Caki2 (cell line): ENCODE measurements at regions of chr9 and their contacts with region 1.

Region 1: DNA sequence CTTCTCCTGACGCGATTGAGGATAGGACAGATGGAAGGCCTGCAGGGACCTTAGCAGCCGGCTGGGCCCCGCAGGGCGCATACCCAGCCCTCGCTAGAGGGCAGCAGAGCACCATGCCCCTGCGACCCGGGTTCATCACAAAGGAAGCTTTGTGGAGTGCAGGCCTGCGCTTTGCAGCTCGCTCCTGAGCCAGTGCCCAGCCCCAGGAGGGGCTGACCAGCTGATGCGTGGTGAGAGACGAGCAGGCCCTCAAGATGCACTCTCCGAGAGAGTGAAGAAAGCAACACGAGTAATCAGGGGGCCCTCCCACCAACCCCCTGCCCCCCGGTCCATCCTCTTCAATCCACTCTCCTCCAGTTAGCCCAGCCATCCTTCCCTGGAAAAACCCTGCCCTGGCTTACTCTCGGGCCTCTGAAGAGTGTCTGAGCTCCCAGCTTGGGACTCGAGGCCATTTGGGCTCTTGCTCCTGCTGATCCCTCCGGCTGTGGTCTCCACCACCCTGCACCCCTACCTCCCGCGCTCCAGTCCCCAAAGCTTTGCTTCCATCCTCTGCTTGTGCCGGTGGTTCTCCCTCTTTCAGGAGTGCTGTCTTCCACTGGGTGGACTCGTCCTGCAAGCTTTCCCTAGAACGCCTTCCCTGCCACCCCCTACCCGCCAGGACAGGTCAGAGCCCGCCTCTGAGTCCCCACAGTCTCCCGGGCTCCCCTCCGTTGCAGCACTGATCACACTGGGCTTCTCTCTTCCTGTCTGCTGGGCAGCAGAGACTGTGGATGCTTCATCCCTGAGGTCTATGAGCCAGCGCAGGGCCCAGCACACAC is 9.1 kb upstream of the KIF12 start:
- DNase-seq: peak; percentile 43

Region 2: DNA sequence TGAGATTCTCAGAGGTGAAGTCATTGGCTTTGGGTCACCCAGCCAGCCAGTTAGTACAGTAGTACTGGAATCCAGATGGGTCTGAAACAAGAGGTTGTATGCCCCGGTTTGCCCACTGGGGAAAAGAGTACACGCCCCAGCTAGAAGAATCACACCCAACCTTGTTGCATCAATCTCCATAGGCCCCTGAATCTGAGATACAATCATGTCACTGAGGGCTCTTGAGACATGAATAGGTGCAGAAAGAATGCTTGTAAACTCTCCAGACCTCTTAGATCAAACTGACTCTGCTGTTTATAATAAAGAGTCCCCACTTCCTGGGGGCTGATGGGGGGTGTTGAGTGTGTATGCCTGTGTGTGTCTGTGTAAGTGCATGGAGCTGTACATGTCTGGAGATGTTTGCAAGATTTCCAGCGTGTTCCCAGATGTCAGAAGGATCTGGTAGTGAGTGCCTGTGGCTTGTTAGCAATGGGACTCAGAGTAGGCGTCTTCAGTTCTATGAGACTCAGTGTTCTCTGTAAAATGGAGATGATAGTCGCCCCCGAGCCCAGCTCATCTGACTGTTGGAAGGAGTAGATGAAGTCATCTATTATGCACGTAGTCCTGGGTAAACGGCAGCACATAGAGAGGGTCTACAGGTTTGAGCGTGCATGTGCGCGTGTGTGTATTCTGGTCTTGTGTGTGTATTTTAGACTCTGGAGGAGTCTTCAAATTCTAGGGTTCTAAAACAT is 95.3 kb after region 1 on chr9:
- in situ Hi-C with region 1: loop called (anchors 5 kb)
- DNase-seq: no peak